Activated CD8-positive, alpha-beta T cell treated with anti-CD3 and anti-CD28 coated beads for 36 hours (primary cell): ENCODE measurements at regions of chr15 and their contacts with region 1.

Region 1: GRCh38 chr15:74906446-74907162 is at the start of gene FAM219B:
- DNase-seq: peak; percentile 88
- ATAC-seq: peak; percentile 89
- H3K4me3 Mint-ChIP-seq: peak within 1 kb of the TSS; percentile 88
- H3K27ac Mint-ChIP-seq: peak within 1 kb of the TSS; percentile 89
- H3K4me1 Mint-ChIP-seq: peaks cover 26% of the 10 kb centered on the region
- H3K27me3 Mint-ChIP-seq: no peaks in the 10 kb centered on the region
- CTCF ChIP-seq: no peak
- total RNA-seq, gene FAM219B: 36.5 to 44.7 TPM

Region 2: GRCh38 chr15:74835307-74835823 is 71.2 kb before region 1 on chr15:
- CTCF ChIA-PET with region 1: interaction called, 22 read pairs
- POLR2A ChIA-PET with region 1: interaction called, 5 read pairs
- intact Hi-C with region 1: no loop called
- DNase-seq: peak; percentile 59
- ATAC-seq: peak; percentile 63
- H3K4me3 Mint-ChIP-seq: no peak overlapping the region
- H3K27ac Mint-ChIP-seq: no peak overlapping the region
- H3K4me1 Mint-ChIP-seq: no peaks in the 10 kb centered on the region
- H3K27me3 Mint-ChIP-seq: no peaks in the 10 kb centered on the region
- CTCF ChIP-seq: peak; percentile 86

Region 3: DNA sequence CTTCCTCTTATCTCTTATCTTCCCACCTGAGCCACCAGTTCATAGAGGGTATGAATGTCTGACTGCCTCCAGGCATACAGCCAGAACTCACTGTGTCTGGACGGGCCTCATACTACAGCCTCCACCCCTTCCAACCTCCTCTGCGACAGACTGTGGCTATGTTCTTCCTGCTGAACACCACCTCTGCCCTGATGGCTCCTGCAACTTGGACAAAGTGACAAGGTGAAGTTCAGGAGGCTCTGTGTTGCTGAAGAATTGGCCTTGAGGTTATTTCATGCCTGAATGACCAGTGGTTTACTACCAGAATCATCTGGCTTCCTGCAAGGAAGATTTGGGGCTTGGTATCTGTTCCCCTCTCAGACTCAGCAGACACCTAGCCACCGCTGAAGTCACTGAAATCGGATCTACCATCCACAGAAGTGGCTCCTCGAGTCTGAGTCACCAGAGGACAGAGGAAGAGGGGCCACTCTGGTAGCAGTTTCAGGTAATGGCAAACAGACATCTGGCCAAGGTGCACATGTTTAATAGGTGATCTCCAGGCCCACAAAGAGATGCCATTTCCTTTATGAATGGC is 49.4 kb before region 1 on chr15:
- CTCF ChIA-PET with region 1: interaction called, 14 read pairs
- POLR2A ChIA-PET with region 1: interaction called, 4 read pairs
- intact Hi-C with region 1: no loop called
- DNase-seq: no peak
- ATAC-seq: peak; percentile 31
- H3K4me3 Mint-ChIP-seq: no peak overlapping the region
- H3K27ac Mint-ChIP-seq: peak overlapping the region; percentile 84
- H3K4me1 Mint-ChIP-seq: peaks cover 32% of the 10 kb centered on the region
- H3K27me3 Mint-ChIP-seq: no peaks in the 10 kb centered on the region
- CTCF ChIP-seq: no peak

Region 4: DNA sequence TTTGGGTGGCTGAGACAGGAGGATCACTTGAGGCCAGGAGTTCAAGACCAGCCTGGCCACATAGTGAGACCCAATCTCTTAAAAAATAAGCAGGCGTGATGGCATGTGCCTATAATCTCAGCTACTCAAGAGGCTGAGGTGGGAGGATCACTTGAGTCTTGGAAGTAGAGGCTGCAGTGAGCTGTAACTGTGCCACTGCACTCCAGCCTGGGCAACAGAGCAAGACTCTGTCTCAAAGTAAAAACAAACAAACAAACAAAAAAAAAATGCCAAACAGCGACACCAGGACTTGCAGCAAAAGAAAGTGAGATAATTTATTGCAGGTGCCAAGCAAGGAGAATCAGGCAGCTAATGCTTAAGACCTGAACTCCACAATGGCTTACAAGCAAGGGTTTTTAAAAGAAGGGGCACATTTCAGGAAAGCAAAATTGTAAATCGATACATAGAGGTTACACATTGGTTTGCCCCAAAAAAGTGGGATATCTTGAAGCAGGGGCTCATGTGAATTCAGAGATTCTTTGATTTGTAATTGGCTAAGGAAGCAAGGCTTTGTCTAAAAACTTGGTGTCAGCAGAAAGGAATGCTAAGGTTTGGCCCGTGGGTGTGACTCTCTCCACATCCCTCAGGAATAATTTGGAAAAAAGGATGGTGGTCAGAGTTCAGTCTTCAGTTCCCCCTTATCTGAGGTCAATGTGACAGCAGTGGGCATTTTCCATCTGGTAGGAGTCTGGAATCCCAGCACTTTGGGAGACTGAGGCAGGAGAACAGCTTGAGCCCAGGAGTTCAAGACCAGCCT is 22.0 kb before region 1 on chr15:
- CTCF ChIA-PET with region 1: interaction called, 52 read pairs
- POLR2A ChIA-PET with region 1: interaction called, 19 read pairs
- intact Hi-C with region 1: no loop called
- DNase-seq: no peak
- ATAC-seq: no peak
- H3K4me3 Mint-ChIP-seq: no peak overlapping the region
- H3K27ac Mint-ChIP-seq: no peak overlapping the region
- H3K4me1 Mint-ChIP-seq: peaks cover 9% of the 10 kb centered on the region
- H3K27me3 Mint-ChIP-seq: no peaks in the 10 kb centered on the region
- CTCF ChIP-seq: no peak

Region 5: GRCh38 chr15:74920456-74920855 is 13.9 kb after region 1 on chr15:
- CTCF ChIA-PET with region 1: interaction called, 23 read pairs
- POLR2A ChIA-PET with region 1: interaction called, 4 read pairs
- intact Hi-C with region 1: no loop called
- DNase-seq: no peak
- ATAC-seq: no peak
- H3K4me3 Mint-ChIP-seq: no peak overlapping the region
- H3K27ac Mint-ChIP-seq: no peak overlapping the region
- H3K4me1 Mint-ChIP-seq: peaks cover 6% of the 10 kb centered on the region
- H3K27me3 Mint-ChIP-seq: no peaks in the 10 kb centered on the region
- CTCF ChIP-seq: no peak

Region 6: GRCh38 chr15:74950078-74951000 is 43.7 kb after region 1 on chr15:
- CTCF ChIA-PET with region 1: interaction called, 13 read pairs
- POLR2A ChIA-PET with region 1: no interaction called
- intact Hi-C with region 1: no loop called
- DNase-seq: peak; percentile 89
- ATAC-seq: peak; percentile 92
- H3K4me3 Mint-ChIP-seq: no peak overlapping the region
- H3K27ac Mint-ChIP-seq: no peak overlapping the region
- H3K4me1 Mint-ChIP-seq: peaks cover 12% of the 10 kb centered on the region
- H3K27me3 Mint-ChIP-seq: no peaks in the 10 kb centered on the region
- CTCF ChIP-seq: peak; percentile 96